ENCODE measurements at regions of chr1 and their contacts with region 1.

Region 1: DNA sequence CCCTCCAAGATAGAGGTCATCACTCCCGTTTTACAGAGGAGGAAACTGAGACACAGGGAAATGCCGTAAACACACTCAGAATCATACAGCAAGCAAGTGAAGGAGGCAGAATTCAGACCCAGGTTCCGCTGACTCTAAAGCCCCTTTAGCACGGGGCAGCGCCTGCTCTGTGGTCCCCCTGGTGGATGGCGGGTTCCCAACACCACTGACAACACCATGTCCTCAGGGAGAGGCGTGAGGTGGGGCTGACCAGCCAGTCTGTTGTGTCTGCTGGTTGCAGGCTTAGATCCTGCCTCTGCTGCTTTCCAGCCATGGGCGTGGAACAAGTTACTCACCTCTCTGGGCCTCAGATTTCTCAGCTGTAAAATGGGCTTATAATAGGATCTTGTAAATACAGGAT is 617.3 kb downstream of the MATN1 start:
- DNase-seq: no peak
- H3K4me3 ChIP-seq: no peak overlapping the region
- H3K27ac ChIP-seq: no peak overlapping the region
- H3K27me3 ChIP-seq: peaks cover 0 to 55% (median 5%) of the 10 kb centered on the region in 45 donors
- CTCF ChIP-seq: peak in 17 of 56 donors; percentile 7 to 34 (median 17)

Region 2: DNA sequence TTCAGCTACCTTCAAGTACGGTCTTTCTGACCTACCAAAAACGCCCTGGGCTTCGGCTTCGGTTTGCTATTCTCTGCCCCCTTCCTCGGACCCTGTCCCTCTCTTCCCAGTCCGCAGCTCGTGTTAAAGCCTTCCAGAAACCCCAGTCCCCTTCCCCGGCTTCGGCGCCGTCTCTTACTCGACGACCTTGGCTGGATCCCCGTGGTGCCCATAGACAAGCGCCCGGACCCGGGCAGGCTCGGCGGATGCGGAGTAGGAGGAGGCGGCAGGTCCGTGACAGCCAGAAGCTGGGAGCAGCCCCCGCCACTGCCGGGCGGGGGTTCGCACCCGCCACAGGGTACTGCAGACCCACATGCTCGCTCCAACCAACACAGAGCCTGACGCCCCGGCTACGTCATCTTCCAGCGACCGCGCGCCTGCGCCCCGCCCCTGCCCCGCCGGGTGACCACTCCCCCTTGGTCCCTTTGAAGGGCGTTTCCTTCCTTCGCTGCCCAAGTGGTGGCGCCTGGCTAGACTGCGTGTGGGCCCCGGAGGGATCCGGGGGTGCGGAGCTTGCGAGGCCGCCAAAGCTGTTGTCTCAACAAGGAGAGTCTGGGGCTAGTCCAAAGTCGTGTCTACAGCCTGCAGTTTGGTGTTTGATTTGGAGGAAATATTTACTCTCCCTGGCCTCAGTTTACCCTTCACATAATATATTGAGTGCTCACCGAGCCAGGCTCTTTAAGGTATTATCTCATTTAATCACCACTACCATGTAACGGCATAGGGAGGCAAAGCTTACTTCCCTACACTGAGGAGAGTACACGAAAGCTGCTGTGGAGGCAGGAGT is 875.4 kb before region 1 on chr1 and contains the start of gene MECR:
- intact Hi-C with region 1: loop called (anchors 5 to 10 kb)
- DNase-seq: peak; percentile 92 to 98 (median 95)
- H3K4me3 ChIP-seq: peak within 1 kb of the TSS; percentile 59 to 97 (median 85)
- H3K27ac ChIP-seq: peak within 1 kb of the TSS in 44 of 59 donors; percentile 7 to 89 (median 66)
- H3K27me3 ChIP-seq: no peaks in the 10 kb centered on the region
- CTCF ChIP-seq: peak in 55 of 56 donors; percentile 18 to 70 (median 52)
- total RNA-seq, gene MECR: 28.4 to 65.3 (median 45.9) TPM

Region 3: GRCh38 chr1:29245876-29246275 is 860.2 kb before region 1 on chr1:
- intact Hi-C with region 1: loop called in 1 of 2 experiments (anchors 5 kb)
- DNase-seq: peak in 8 of 10 donors; percentile 31 to 74 (median 60)
- H3K4me3 ChIP-seq: no peak overlapping the region
- H3K27ac ChIP-seq: no peak overlapping the region
- H3K27me3 ChIP-seq: no peaks in the 10 kb centered on the region
- CTCF ChIP-seq: peak in 53 of 56 donors; percentile 24 to 73 (median 53)

Region 4: DNA sequence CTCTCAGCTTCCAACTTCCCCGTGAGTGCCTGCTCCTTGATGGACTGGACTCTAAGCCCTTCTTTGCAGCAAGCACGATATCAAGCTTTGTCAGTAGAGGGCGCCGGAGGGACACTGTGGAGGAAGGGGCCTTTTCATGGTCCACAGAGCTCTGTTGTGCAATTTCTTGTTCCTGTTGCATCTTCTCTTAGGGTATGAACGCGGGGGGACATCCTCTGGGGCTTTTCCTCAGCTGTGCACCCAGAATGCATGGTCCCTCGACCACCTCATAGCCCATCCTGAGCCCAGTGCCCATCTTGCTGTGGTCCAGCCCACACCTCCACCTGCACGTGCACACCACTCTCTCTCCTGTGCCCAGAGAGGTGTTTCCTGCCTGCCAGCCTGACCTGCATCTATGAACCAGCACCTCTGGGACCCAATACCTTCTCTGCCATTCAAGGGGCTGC is 313.0 kb before region 1 on chr1:
- intact Hi-C with region 1: loop called in 1 of 2 experiments (anchors 10 kb)
- DNase-seq: peak in 9 of 10 donors; percentile 51 to 88 (median 76)
- H3K4me3 ChIP-seq: no peak overlapping the region
- H3K27ac ChIP-seq: no peak overlapping the region
- H3K27me3 ChIP-seq: no peaks in the 10 kb centered on the region
- CTCF ChIP-seq: peak; percentile 27 to 83 (median 72)

Region 5: DNA sequence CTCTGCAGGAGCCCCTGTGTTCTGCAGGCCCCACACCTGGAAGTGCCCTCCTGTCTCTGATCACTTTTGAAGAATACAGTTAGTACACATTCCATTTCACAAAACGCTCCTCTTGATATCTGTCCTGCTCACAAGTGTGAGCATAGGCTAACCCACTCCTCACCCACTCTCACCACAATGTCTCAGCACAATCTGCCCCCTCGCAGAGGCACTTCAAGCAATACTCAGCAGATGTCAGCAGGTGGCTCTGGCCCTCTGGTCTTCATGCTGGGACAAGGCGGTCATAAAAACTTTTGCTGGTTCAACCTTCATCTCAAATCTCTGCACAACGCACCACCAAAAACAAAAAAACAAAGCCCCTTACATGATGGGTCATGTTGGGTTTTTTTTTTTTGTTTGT is 53.9 kb before region 1 on chr1:
- intact Hi-C with region 1: no loop called
- DNase-seq: no peak
- H3K4me3 ChIP-seq: no peak overlapping the region
- H3K27ac ChIP-seq: no peak overlapping the region
- H3K27me3 ChIP-seq: peaks cover 0 to 19% (median 0%) of the 10 kb centered on the region in 45 donors
- CTCF ChIP-seq: no peak

Region 6: GRCh38 chr1:30145723-30146303 is 39.7 kb after region 1 on chr1:
- intact Hi-C with region 1: no loop called
- DNase-seq: no peak
- H3K4me3 ChIP-seq: no peak overlapping the region
- H3K27ac ChIP-seq: no peak overlapping the region
- H3K27me3 ChIP-seq: peaks cover 0 to 25% (median 0%) of the 10 kb centered on the region in 45 donors
- CTCF ChIP-seq: no peak

Region 7: DNA sequence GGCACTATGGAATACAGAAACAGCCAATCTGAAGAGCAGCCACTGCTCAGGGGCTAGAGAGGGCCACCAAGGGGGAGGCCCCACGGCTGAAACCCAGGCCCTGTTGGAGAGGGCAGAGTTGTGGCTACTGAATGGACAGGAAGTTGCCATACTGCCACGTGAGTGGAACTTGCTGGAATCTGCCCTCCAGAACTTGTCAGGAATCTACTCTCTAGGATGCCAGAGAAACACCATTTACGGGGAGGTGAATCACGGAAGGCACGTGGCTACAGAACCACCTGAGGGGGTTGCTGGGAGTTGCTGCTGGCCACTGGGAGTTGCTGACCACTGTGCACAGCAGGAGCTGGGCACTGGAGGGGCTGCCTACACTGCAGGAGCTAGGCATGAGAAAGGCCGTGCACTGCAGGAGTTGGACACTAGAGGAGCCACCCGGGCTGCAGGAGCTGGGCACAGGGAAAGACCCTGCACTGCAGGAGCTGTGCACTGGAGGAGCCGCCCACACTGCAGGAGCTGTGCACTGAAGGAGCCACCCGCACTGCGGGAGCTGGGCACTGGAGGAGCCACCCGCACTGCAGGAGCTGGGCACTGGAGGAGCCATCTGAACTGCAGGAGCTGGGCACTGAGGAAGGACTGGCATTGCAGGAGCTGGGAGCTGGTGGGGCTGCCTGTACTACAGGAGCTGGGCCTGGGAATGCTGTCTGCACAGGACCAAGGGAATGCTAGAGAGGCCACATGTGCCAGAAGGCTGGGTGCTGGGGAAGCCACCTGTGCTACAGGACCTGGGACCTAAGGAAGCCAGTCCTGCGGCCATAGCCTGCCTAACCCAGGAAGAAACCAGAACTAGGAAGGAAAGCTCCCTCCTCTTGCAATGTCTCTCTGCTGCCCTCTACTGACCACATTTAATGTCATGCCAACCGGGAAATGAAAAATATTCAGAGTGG is 273.8 kb after region 1 on chr1:
- intact Hi-C with region 1: loop called in 1 of 2 experiments (anchors 10 kb)
- DNase-seq: peak in 6 of 10 donors; percentile 27 to 67 (median 54)
- H3K4me3 ChIP-seq: no peak overlapping the region
- H3K27ac ChIP-seq: peak overlapping the region in 11 of 59 donors; percentile 0 to 58 (median 26)
- H3K27me3 ChIP-seq: peaks cover 0 to 51% (median 2%) of the 10 kb centered on the region in 45 donors
- CTCF ChIP-seq: peak; percentile 69 to 95 (median 82)

Measured in dorsolateral prefrontal cortex (tissue), 120 donors.